Left ventricle myocardium superior (tissue), 1 donor: ENCODE measurements at regions of chr6 and their contacts with region 1.

Region 1: GRCh38 chr6:109229536-109229935 is 134.2 kb downstream of the CEP57L1 start:
- DNase-seq: no peak
- ATAC-seq: no peak

Region 2: GRCh38 chr6:109269953-109270517 is 40.5 kb after region 1 on chr6:
- intact Hi-C with region 1: loop called (anchors 10 kb)
- DNase-seq: no peak
- ATAC-seq: no peak